H1 (cell line): ENCODE measurements at regions of chr12 and their contacts with region 1.

Region 1: GRCh38 chr12:52865090-52865944 is 16.5 kb upstream of the KRT78 start:
- DNase-seq: peak in 1 of 2 experiments; percentile 95
- H3K4me3 ChIP-seq: no peak overlapping the region
- H3K27ac ChIP-seq: no peak overlapping the region
- H3K4me1 ChIP-seq: no peaks in the 10 kb centered on the region; a peak in 1 of 7 replicates
- H3K27me3 ChIP-seq: no peaks in the 10 kb centered on the region; a peak in 1 of 7 replicates
- CTCF ChIP-seq: peak; percentile 84 to 95 (median 94)
- EP300 ChIP-seq: no peak
- POLR2A ChIP-seq: no peak
- RAD21 ChIP-seq: peak; percentile 91 to 92

Region 2: GRCh38 chr12:52667511-52667910 is 197.8 kb before region 1 on chr12:
- CTCF ChIA-PET with region 1: interaction called, 22 read pairs
- POLR2A ChIA-PET with region 1: no interaction called
- DNase-seq: no peak
- H3K4me3 ChIP-seq: no peak overlapping the region
- H3K27ac ChIP-seq: no peak overlapping the region
- H3K4me1 ChIP-seq: no peaks in the 10 kb centered on the region
- H3K27me3 ChIP-seq: no peaks in the 10 kb centered on the region; a peak in 1 of 7 replicates
- CTCF ChIP-seq: peak; percentile 28 to 64 (median 63)
- EP300 ChIP-seq: no peak
- POLR2A ChIP-seq: no peak
- RAD21 ChIP-seq: peak; percentile 79 to 80

Region 3: GRCh38 chr12:52715416-52715815 is 149.9 kb before region 1 on chr12:
- CTCF ChIA-PET with region 1: interaction called, 30 read pairs
- POLR2A ChIA-PET with region 1: no interaction called
- DNase-seq: peak in 1 of 2 experiments; percentile 78
- H3K4me3 ChIP-seq: no peak overlapping the region
- H3K27ac ChIP-seq: no peak overlapping the region
- H3K4me1 ChIP-seq: peaks cover 0 to 7% (median 0%) of the 10 kb centered on the region in 4 experiments; a peak in 3 of 7 replicates
- H3K27me3 ChIP-seq: peaks cover 8 to 32% (median 26%) of the 10 kb centered on the region in 4 experiments
- CTCF ChIP-seq: peak; percentile 66 to 74 (median 71)
- EP300 ChIP-seq: no peak
- POLR2A ChIP-seq: no peak
- RAD21 ChIP-seq: peak; percentile 44 to 67

Region 4: GRCh38 chr12:52826611-52827498 is 38.5 kb before region 1 on chr12:
- CTCF ChIA-PET with region 1: interaction called, 13 read pairs
- POLR2A ChIA-PET with region 1: no interaction called
- DNase-seq: no peak
- H3K4me3 ChIP-seq: no peak overlapping the region
- H3K27ac ChIP-seq: no peak overlapping the region
- H3K4me1 ChIP-seq: no peaks in the 10 kb centered on the region; a peak in 2 of 7 replicates
- H3K27me3 ChIP-seq: 0 out of 7 replicates have a peak, but pooled peaks cover 0 to 2% (median 0%) of the 10 kb centered on the region in 4 experiments
- CTCF ChIP-seq: no peak
- EP300 ChIP-seq: no peak
- POLR2A ChIP-seq: no peak
- RAD21 ChIP-seq: no peak